ENCODE measurements at regions of chr14 and their contacts with region 1.

Region 1: DNA sequence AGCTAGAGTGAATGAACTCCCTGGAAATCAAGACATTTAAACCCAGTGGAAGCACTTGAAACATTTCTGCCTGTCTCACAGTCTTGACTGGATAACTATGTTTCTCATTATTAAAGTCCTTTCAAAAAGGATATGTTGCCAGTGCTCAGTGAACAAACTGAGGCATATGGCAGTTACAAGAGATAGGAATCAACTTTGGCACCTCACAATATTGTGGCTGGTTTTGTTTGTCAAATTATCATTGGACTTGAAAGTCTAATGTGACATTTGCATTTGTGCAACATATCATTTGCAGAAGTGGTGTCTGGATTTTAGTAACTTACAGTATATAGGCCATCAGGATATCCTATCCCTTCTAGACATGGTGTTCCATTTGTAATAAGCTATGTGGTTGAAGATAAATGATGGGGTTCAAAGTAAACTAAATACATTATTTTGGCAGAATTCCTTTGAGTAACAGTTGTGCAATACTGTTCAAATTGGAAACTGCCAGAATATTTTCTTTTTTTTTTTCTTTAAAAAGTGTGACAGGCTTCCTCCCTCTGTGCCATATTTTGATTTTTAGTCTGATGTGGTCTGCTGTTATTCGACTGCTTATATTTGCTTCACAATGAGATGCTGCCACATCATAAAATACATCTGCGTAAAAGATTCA is 927.7 kb downstream of the FLRT2 start:
- DNase-seq: no peak
- H3K4me3 ChIP-seq: no peak overlapping the region
- CTCF ChIP-seq: no peak
- POLR2A ChIP-seq: no peak

Region 2: DNA sequence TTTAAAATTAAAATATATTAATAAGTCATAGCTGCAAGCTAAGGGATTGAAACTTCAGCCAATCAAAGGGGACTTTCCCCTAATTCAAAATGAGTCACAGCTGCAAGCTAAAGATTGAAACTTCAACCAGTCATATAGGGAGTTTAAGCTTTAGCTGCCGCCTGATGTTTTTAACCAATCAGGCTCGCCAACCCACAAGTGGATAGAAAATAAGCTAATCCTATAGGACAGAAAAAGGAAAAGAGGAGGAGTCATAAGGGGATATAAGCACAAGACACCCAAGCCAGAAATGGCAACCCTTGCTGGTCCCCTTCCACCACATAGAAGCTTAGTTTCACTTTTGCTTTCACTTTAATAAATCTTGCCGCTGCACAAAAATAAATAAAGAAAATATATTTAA is 380.8 kb after region 1 on chr14:
- intact Hi-C with region 1: loop called (anchors 5 kb)
- DNase-seq: no peak
- H3K4me3 ChIP-seq: no peak overlapping the region
- CTCF ChIP-seq: no peak
- POLR2A ChIP-seq: no peak

Measured in lower leg skin (tissue), 4 donors.